ENCODE measurements at regions of chr6 and their contacts with region 1.

Region 1: GRCh38 chr6:42428326-42429041 is 23.2 kb downstream of the TRERF1 start:
- ATAC-seq: peak; percentile 50 to 98 (median 85)
- H3K4me3 ChIP-seq: no peak overlapping the region
- H3K27ac ChIP-seq: peak overlapping the region in 1 of 2 donors; percentile 12
- H3K4me1 ChIP-seq: peaks cover 14 to 18% of the 10 kb centered on the region in 2 donors

Region 2: GRCh38 chr6:42260972-42261371 is 167.5 kb before region 1 on chr6:
- in situ Hi-C with region 1: loop called in 1 of 9 experiments (anchors 25 kb)
- ATAC-seq: peak; percentile 5 to 86 (median 70)
- H3K4me3 ChIP-seq: no peak overlapping the region
- H3K27ac ChIP-seq: peak overlapping the region in 1 of 2 donors; percentile 42
- H3K4me1 ChIP-seq: no peaks in the 10 kb centered on the region

Measured in motor neuron (in vitro differentiated cells).